ENCODE measurements at regions of chr2 and their contacts with region 1.

Region 1: DNA sequence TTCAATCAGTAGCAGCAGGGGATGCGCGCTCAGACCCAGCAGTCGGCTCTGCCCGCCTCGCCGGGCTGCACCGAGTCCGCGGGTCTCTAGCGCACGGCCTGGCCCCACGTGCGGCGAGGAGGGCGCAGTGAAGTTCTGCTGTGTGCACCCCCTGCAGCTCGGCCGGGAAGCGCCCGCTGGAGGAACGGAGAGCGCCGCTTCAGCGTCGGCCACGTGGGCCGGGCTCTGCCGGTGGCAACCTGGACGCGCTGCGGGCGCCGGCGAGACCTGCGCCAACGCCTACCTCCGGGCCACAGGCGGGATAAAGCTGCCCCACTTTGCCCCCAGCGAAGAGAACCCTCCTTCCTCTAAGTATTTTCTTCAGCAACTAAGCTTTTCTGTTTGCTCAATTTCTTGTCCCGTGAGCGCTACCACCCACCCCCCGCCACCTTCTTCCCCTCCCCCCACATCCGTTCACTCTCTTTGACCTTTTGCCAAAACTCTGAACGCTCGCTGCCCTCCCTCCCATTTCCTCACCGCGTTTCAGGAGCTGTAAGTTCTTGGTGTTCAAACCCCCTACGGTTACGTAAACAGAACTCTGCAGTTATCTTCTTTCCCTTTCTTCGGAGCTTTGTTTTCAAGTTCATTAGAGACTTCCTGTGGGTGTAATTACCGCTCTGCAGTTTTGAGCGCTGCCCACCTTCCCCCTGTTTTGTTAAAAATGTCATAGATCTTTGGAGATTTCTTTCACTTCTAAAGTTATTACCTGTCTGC is 42.6 kb upstream of the EDAR start:
- DNase-seq: peak; percentile 52 to 93 (median 75)
- ATAC-seq: peak; percentile 78
- H3K4me3 ChIP-seq: peak overlapping the region; percentile 56
- H3K4me3 Mint-ChIP-seq: peak overlapping the region; percentile 82
- H3K27ac ChIP-seq: peak overlapping the region; percentile 82 to 86
- H3K27ac Mint-ChIP-seq: peak overlapping the region; percentile 92
- H3K4me1 ChIP-seq: peaks cover 81% of the 10 kb centered on the region
- H3K4me1 Mint-ChIP-seq: peaks cover 77% of the 10 kb centered on the region
- H3K27me3 ChIP-seq: no peaks in the 10 kb centered on the region
- H3K27me3 Mint-ChIP-seq: no peaks in the 10 kb centered on the region
- CTCF ChIP-seq: no peak

Region 2: GRCh38 chr2:108971661-108972566 is 59.7 kb before region 1 on chr2:
- CTCF ChIA-PET with region 1: interaction called, 3 read pairs
- POLR2A ChIA-PET with region 1: interaction called, 12 read pairs
- intact Hi-C with region 1: no loop called
- DNase-seq: no peak
- ATAC-seq: peak; percentile 55
- H3K4me3 ChIP-seq: no peak overlapping the region
- H3K4me3 Mint-ChIP-seq: peak overlapping the region; percentile 51
- H3K27ac ChIP-seq: no peak overlapping the region
- H3K27ac Mint-ChIP-seq: peak overlapping the region; percentile 45
- H3K4me1 ChIP-seq: peaks cover 53% of the 10 kb centered on the region
- H3K4me1 Mint-ChIP-seq: peaks cover 90% of the 10 kb centered on the region
- H3K27me3 ChIP-seq: no peaks in the 10 kb centered on the region
- H3K27me3 Mint-ChIP-seq: no peaks in the 10 kb centered on the region
- CTCF ChIP-seq: no peak

Region 3: DNA sequence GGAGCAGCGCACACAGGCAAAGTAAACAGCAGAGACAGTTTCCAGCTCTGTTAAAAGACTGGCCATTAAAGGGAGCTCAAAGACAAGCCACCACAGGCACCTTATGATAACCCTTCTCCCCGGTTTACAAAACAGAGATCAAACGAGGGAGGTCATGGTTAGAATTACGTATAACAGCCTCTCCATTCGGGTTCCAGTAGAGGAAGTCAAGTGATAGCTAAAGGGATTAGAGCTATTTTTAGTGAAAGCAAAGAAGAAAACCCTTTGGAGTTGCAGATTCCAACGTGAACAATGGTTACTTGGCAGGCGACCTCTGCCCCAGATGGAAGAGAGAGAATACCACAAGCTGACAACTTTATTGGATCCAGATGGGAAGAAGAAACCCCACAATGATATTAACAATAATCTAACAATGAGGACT is 11.4 kb before region 1 on chr2:
- CTCF ChIA-PET with region 1: interaction called, 7 read pairs
- POLR2A ChIA-PET with region 1: interaction called, 49 read pairs
- intact Hi-C with region 1: no loop called
- DNase-seq: peak in 4 of 14 experiments; percentile 19 to 49 (median 46)
- ATAC-seq: peak; percentile 96
- H3K4me3 ChIP-seq: no peak overlapping the region
- H3K4me3 Mint-ChIP-seq: no peak overlapping the region
- H3K27ac ChIP-seq: no peak overlapping the region
- H3K27ac Mint-ChIP-seq: peak overlapping the region; percentile 7
- H3K4me1 ChIP-seq: peaks cover 15% of the 10 kb centered on the region
- H3K4me1 Mint-ChIP-seq: peaks cover 40% of the 10 kb centered on the region
- H3K27me3 ChIP-seq: no peaks in the 10 kb centered on the region
- H3K27me3 Mint-ChIP-seq: no peaks in the 10 kb centered on the region
- CTCF ChIP-seq: no peak

Region 4: GRCh38 chr2:109062859-109063700 is 31.4 kb after region 1 on chr2:
- CTCF ChIA-PET with region 1: no interaction called
- POLR2A ChIA-PET with region 1: interaction called, 24 read pairs
- intact Hi-C with region 1: no loop called
- DNase-seq: peak in 7 of 14 experiments; percentile 9 to 50 (median 25)
- ATAC-seq: peak; percentile 32
- H3K4me3 ChIP-seq: no peak overlapping the region
- H3K4me3 Mint-ChIP-seq: no peak overlapping the region
- H3K27ac ChIP-seq: no peak overlapping the region
- H3K27ac Mint-ChIP-seq: no peak overlapping the region
- H3K4me1 ChIP-seq: peaks cover 25% of the 10 kb centered on the region
- H3K4me1 Mint-ChIP-seq: peaks cover 47% of the 10 kb centered on the region
- H3K27me3 ChIP-seq: no peaks in the 10 kb centered on the region
- H3K27me3 Mint-ChIP-seq: no peaks in the 10 kb centered on the region
- CTCF ChIP-seq: no peak

Region 5: GRCh38 chr2:109143214-109144187 is 111.8 kb after region 1 on chr2:
- CTCF ChIA-PET with region 1: no interaction called
- POLR2A ChIA-PET with region 1: interaction called, 18 read pairs
- intact Hi-C with region 1: loop called in 1 of 2 experiments (anchors 5 kb)
- DNase-seq: peak; percentile 25 to 83 (median 55)
- ATAC-seq: peak; percentile 78
- H3K4me3 ChIP-seq: peak overlapping the region; percentile 14
- H3K4me3 Mint-ChIP-seq: peak overlapping the region; percentile 53
- H3K27ac ChIP-seq: no peak overlapping the region
- H3K27ac Mint-ChIP-seq: peak overlapping the region; percentile 81
- H3K4me1 ChIP-seq: peaks cover 24% of the 10 kb centered on the region
- H3K4me1 Mint-ChIP-seq: peaks cover 52% of the 10 kb centered on the region
- H3K27me3 ChIP-seq: no peaks in the 10 kb centered on the region
- H3K27me3 Mint-ChIP-seq: no peaks in the 10 kb centered on the region
- CTCF ChIP-seq: no peak

Region 6: DNA sequence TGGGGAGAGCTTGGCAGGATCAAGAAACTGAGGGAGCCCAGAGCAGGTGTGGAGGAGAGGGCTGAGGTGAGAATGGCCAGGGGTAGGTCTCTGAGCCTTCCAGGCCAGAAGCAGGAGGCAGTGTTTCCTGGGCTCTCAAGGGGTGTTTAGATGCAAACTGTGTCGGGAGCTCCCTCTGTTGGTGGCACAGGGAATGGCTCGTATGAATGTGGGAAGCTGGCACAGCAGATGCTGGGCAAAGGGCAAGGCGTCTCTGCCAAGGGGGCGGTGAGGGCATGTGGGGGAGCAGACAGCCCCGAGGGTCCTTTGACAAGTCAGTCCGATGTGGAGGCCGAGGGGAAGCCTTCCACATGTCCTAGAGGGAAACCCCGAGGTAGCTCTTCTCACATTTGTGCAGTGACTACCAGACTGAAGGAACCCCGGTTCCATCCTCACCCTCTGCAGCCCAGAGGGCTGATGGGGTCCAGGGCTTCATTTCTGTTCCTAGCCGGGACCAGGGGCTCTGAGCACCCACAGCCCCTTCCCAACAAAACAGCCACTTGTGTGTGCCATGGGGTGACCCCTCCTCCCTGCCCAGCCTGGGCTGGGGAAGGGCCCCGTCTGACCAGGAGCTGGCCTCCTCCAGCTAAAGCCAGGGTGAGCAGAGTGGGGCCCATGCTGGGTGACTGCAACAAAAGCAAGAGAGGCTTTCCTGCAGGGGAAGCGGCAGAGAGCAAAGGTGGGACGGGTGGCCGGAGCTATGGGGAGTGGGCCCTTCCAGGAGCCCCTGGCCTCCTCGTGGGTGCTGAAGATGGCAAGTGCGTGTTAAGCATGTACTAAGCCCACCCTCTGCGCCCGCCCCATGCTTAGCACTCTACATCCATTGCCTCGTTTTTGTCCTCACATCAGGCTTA is 478.7 kb after region 1 on chr2:
- CTCF ChIA-PET with region 1: no interaction called
- POLR2A ChIA-PET with region 1: interaction called, 13 read pairs
- intact Hi-C with region 1: no loop called
- DNase-seq: peak; percentile 66 to 85 (median 72)
- ATAC-seq: peak; percentile 95
- H3K4me3 ChIP-seq: no peak overlapping the region
- H3K4me3 Mint-ChIP-seq: no peak overlapping the region
- H3K27ac ChIP-seq: no peak overlapping the region
- H3K27ac Mint-ChIP-seq: no peak overlapping the region
- H3K4me1 ChIP-seq: peaks cover 7% of the 10 kb centered on the region
- H3K4me1 Mint-ChIP-seq: no peaks in the 10 kb centered on the region
- H3K27me3 ChIP-seq: peaks cover 0 to 3% of the 10 kb centered on the region in 2 experiments
- H3K27me3 Mint-ChIP-seq: no peaks in the 10 kb centered on the region
- CTCF ChIP-seq: peak; percentile 82